Right ventricle myocardium inferior (tissue), 1 donor: ENCODE measurements at regions of chr12 and their contacts with region 1.

Region 1: DNA sequence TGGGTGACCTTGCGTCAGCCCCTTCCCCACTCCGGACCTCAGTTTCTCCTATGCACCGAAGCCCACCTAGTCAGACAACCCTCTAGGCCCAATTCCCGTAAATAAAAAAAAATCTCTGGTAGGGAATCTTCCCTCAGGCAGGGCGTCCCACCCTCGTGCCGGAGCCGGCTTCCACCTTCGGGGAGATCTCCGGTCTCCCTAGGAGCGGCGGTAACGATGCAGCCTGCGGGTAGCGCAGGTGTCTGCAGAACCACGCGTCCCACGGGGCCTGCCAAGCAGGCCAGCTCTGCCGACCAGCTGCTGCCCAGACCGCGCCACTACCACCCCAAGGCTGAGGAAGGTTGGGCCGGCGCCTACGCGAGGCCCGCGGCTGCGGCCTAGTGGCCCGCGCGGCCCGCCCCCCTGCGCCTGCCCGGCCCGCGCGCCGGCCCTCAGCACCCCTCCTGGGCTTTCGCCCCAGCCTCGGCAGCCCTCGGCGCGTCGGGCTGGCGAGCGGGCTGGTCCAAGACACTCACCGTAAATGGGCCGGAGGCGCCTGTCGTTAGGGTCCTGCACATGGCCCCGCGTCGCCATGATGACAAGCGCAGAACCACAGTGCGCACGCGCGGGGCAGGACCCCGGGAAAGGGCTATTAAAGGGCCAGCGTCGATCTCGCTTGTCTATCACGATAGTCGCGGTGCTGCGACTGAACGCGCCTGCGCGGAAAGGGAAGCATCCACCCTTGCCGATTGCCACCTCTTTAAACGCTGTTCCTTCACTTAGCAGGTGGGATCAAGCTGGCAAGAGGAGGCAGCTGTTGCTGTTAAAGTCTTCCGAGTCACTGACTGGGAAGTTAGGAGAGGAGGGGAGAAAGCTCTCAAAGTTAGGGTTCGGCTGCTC is at the start of gene NAA25:
- DNase-seq: peak; percentile 97
- ATAC-seq: peak; percentile 94
- total RNA-seq, gene NAA25: 18.0 TPM

Region 2: DNA sequence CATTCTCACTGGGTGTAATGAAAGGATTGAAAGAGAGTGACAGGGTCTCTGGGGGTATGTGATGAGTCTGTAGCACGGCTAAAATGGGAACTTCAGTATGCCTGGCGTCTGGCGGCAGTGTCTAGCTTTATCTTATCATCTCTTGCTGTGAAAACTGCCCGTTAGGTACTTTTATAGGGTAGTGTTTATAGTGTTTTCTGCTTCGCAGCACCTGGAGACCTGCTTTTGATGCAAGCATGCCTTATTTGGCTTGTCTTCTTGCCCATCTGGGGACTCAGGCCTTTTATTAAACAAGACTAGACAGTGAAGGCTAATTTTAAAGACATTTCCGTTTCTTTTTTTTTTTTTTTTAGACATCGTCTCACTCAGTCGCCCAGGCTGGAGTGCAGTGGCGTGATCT is 378.0 kb before region 1 on chr12:
- intact Hi-C with region 1: no loop called
- DNase-seq: no peak
- ATAC-seq: no peak

Region 3: GRCh38 chr12:112125250-112125999 is 17.0 kb after region 1 on chr12 and contains the start of gene TRAFD1:
- intact Hi-C with region 1: loop called (anchors 1 kb)
- DNase-seq: peak; percentile 98
- ATAC-seq: peak; percentile 98
- total RNA-seq, gene TRAFD1: 20.7 TPM

Region 4: DNA sequence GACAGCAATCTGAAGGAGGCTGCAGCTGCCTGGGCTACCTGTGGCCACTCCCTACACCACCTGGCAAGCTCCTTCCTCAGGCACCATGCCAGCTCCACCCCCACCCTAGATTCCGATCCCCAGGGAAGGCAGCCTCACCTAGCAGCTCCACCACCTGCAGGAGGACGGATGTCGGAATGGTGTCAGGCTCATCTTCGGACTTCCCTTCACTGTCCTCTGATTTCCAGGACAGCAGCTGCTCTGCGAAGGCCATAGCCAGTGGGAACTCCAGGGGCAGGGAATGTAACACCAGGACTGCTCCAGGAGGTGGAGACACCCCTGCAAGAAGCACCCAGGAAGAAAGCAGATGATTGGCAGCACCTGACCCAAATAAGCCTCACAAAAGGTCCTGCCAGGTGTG is 82.2 kb after region 1 on chr12:
- intact Hi-C with region 1: no loop called
- DNase-seq: no peak
- ATAC-seq: no peak

Region 5: GRCh38 chr12:112393328-112393727 is 284.9 kb after region 1 on chr12:
- intact Hi-C with region 1: no loop called
- DNase-seq: no peak
- ATAC-seq: no peak